ENCODE measurements at regions of chr11 and their contacts with region 1.

Region 1: DNA sequence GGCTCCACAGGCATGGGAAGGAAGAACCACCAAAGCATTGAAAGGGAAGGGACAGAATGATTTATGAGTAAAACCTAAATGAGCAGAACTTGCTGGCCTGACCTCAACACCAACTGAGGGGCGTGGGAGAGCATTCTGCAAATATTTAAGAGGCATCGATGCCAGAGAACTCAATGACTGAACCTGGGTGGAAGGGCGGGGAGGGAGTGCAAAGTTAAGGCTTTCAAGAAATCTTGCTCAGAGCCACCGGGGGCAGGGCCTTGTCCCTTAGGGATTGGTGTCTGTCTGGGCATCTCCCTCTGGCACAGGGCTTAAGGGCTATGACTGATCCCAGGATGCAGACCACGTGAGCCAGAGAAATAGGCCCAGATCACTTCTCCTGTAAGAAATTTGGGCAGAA is 137.1 kb downstream of the ADAMTS15 start:
- DNase-seq: no peak

Region 2: GRCh38 chr11:130726234-130727037 is 140.9 kb after region 1 on chr11:
- intact Hi-C with region 1: loop called (anchors 5 kb)
- DNase-seq: no peak

Region 3: DNA sequence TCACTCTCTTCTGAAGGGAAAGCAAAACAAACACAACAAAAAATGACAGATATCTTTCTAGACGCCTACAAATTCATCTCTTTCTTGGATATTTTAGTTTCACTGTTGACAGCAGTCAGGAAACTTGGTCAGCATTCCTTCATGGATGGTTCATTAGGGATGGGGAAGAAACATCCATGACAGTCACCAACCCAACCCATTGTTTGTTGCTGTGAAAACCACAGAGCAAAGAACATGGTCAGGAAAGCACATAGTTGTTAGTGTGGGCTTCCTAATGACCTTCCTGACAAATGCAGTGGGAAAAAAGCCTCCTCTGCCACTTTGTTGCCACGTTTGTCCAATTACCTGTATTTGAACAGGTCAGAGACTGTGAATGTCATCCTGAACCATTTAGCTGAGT is 470.5 kb after region 1 on chr11:
- intact Hi-C with region 1: no loop called
- DNase-seq: no peak